Mammary epithelial cell (primary cell): ENCODE measurements at regions of chr18 and their contacts with region 1.

Region 1: DNA sequence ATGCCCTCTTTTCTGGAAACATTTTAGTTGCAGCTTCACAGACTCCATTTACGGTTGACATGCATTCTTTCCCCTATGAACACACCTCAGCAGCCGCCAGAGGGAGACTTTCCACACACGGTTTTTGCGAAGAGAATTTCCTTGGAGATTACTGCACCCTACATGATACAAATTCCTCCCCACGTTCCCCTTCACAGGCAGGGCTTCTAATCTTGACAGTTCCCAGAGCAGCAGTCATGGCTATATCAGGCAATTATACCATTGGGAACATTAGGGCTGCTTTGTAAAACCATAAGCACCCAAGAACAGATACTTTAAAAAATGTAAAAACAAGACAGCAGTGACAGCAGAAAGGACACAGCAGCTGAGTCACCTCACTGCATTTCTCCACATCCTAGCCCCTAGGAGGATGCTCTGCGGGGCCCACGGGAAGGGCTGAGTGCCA is 253.8 kb downstream of the TGIF1 start:
- DNase-seq: peak; percentile 39
- H3K4me3 ChIP-seq: no peak overlapping the region
- H3K27ac ChIP-seq: no peak overlapping the region
- H3K4me1 ChIP-seq: peaks cover 4% of the 10 kb centered on the region
- H3K27me3 ChIP-seq: no peaks in the 10 kb centered on the region
- CTCF ChIP-seq: peak; percentile 75 to 85

Region 2: GRCh38 chr18:3741336-3741735 is 37.6 kb after region 1 on chr18:
- CTCF ChIA-PET with region 1: no interaction called
- dilution Hi-C with region 1: no loop called
- in situ Hi-C with region 1: no loop called
- intact Hi-C with region 1: no loop called
- DNase-seq: no peak
- H3K4me3 ChIP-seq: no peak overlapping the region
- H3K27ac ChIP-seq: no peak overlapping the region
- H3K4me1 ChIP-seq: no peaks in the 10 kb centered on the region
- H3K27me3 ChIP-seq: no peaks in the 10 kb centered on the region
- CTCF ChIP-seq: no peak

Region 3: DNA sequence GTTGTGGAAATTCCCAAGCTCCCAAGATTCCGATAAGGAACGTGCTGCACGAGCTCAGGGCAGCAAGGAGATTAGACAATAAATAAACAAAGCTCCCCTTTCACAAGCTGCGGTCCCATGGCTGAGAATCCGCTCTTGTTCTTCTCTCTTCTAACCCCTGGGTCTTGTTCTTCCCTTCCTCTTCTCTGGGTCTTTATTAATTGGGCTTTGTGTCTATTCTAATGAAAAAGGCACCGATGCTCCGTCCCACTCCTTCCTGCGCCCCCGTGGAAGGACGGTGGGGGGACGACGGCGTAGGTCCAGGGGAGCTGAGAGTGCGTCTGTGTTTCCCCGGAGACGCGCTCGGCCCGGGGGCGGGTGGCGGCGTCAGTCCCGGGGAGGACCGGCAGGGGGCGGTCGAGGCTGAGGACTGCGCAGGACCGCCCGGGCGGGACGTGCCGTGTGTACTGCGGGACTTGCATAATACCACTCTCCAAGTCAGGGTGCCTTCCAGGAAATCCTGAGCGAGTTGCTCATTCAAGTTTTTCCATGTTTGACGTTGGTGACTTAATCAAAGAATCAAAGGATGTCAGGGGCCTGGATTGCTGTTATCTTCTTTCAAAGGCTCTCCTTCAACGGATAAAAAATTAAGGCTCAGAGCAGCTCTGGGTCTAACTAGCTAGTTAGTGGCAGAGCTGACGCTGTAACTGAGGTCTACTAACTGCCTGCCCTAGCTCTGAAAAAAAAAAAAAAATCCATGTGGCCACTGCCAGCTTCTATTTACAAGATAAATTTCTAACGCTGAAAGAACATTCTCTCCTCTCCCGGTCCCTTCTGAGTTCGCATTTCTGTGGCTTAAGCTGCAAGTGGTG is 67.6 kb after region 1 on chr18:
- CTCF ChIA-PET with region 1: interaction called, 3 read pairs
- dilution Hi-C with region 1: no loop called
- in situ Hi-C with region 1: no loop called
- intact Hi-C with region 1: loop called (anchors 1 kb)
- DNase-seq: peak; percentile 83
- H3K4me3 ChIP-seq: peak overlapping the region in 2 of 3 experiments; percentile 27 to 39
- H3K27ac ChIP-seq: peak overlapping the region; percentile 47
- H3K4me1 ChIP-seq: peaks cover 5% of the 10 kb centered on the region
- H3K27me3 ChIP-seq: no peaks in the 10 kb centered on the region
- CTCF ChIP-seq: peak; percentile 67 to 93

Region 4: DNA sequence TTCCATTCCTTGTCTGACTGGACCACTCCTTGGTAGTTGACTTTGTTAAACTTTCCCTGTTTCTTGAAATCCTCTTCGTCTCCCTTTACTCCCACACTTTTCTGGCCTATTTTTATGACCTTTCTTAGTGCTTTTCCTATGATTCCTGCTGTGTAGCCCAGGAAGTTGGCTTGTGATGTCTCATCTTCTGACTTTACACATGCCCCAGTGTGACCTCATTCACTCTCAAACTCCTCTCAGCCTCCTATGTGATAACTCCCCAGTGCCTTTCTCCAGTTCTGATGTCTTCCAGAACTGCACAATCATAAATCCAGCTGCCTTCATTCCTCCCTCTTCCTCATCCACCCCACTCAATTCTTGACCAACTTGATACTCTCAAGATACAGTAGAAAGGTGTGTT is 153.8 kb after region 1 on chr18:
- CTCF ChIA-PET with region 1: no interaction called
- dilution Hi-C with region 1: loop called (anchors 5 kb)
- in situ Hi-C with region 1: no loop called
- intact Hi-C with region 1: no loop called
- DNase-seq: no peak
- H3K4me3 ChIP-seq: no peak overlapping the region
- H3K27ac ChIP-seq: no peak overlapping the region
- H3K4me1 ChIP-seq: no peaks in the 10 kb centered on the region
- H3K27me3 ChIP-seq: no peaks in the 10 kb centered on the region
- CTCF ChIP-seq: no peak

Region 5: DNA sequence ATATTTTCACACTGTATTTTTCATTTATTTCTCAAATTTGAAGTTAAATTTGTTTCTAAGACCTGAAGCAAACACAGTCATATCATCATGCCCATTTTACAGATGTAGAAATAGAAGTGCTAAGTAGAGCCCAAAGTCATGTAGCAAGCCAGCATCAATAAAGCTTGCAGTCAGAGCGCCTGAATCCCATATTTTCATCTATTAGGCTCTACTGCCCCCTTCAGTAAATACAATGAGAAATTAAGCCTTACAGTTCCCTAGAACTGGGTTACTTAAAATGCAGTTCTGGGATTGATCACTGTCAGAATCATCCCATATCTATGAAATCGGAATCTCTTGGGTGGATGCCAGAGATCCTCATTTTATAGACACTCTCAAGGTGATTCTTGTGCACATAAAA is 166.1 kb after region 1 on chr18:
- CTCF ChIA-PET with region 1: interaction called, 4 read pairs
- dilution Hi-C with region 1: no loop called
- in situ Hi-C with region 1: loop called (anchors 10 kb)
- intact Hi-C with region 1: loop called (anchors 1 kb)
- DNase-seq: peak; percentile 37
- H3K4me3 ChIP-seq: no peak overlapping the region
- H3K27ac ChIP-seq: no peak overlapping the region
- H3K4me1 ChIP-seq: no peaks in the 10 kb centered on the region
- H3K27me3 ChIP-seq: peaks cover 1% of the 10 kb centered on the region
- CTCF ChIP-seq: peak; percentile 46 to 59

Region 6: DNA sequence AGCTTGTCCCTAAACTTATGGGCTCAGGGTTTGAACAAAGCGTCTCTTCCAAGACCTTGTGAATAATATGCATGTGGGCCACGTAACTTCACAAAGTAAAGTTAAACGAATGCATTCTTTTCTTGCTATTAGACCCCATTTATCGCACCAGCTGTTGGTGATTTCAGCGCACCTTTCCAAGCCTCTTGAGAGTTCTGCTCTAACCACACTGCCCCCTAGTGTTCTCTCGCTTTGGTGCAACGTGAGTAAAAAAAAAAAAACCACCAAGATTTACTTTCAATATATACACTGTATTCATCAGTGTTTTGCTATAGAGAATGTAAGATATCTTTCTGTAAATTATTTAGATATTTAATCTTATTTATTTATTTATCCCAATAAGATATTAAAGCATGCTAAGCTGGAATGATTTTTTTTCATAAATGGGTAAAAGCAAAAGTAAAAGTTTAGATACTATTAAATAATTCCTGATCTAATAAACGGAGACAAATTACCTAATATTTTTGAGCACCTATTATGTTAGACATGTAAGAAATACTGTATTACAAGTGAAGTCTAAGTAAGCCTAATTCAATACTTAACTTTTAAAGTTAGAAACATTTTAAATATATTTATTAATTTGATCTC is 291.8 kb after region 1 on chr18:
- CTCF ChIA-PET with region 1: no interaction called
- dilution Hi-C with region 1: loop called (anchors 5 kb)
- in situ Hi-C with region 1: loop called (anchors 10 to 25 kb)
- intact Hi-C with region 1: loop called (anchors 1 kb)
- DNase-seq: peak; percentile 55
- H3K4me3 ChIP-seq: peak overlapping the region in 2 of 3 experiments; percentile 3 to 22
- H3K27ac ChIP-seq: no peak overlapping the region
- H3K4me1 ChIP-seq: peaks cover 5% of the 10 kb centered on the region
- H3K27me3 ChIP-seq: no peaks in the 10 kb centered on the region
- CTCF ChIP-seq: peak; percentile 87 to 92

Region 7: GRCh38 chr18:4004183-4004829 is 300.6 kb after region 1 on chr18:
- CTCF ChIA-PET with region 1: no interaction called
- dilution Hi-C with region 1: loop called (anchors 5 kb)
- in situ Hi-C with region 1: loop called (anchors 10 to 25 kb)
- intact Hi-C with region 1: no loop called
- DNase-seq: peak; percentile 67
- H3K4me3 ChIP-seq: no peak overlapping the region
- H3K27ac ChIP-seq: peak overlapping the region; percentile 4
- H3K4me1 ChIP-seq: peaks cover 11% of the 10 kb centered on the region
- H3K27me3 ChIP-seq: no peaks in the 10 kb centered on the region
- CTCF ChIP-seq: no peak

Region 8: DNA sequence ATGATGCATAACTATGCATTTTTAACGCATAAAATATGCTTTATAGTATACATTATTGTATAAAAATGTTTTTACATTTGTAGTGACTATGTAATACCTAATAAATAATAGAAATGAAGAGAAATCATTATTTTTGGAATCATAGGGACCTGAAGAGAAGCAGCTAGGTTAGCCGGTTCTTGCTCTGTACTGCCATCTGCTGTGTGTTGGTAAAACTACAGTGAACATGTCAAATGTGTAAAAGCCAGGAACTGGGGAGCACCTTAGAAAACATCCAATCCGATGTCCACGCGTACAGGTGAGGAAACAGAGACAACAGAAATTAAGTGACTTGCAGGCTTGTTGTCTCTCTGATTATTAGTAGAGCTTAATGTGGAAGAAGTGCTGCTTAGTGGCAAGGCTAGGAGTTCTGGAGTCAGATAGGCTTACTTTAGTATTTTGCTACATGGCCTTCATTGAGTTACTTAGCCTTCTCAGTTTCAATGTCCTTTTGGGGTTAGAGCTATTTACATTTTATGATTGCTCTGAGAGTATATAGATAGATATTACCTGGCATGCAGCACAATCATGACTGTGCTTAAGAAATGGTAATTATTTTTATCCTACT is 364.9 kb after region 1 on chr18:
- CTCF ChIA-PET with region 1: no interaction called
- dilution Hi-C with region 1: no loop called
- in situ Hi-C with region 1: no loop called
- intact Hi-C with region 1: loop called (anchors 2 kb)
- DNase-seq: peak; percentile 44
- H3K4me3 ChIP-seq: no peak overlapping the region
- H3K27ac ChIP-seq: no peak overlapping the region
- H3K4me1 ChIP-seq: no peaks in the 10 kb centered on the region
- H3K27me3 ChIP-seq: no peaks in the 10 kb centered on the region
- CTCF ChIP-seq: peak; percentile 65 to 77